Psoas muscle (tissue), 8 donors: ENCODE measurements at regions of chr16 and their contacts with region 1.

Region 1: GRCh38 chr16:65126845-65127624 is 5.2 kb upstream of the CDH11 start:
- DNase-seq: no peak
- ATAC-seq: peak in 1 of 4 donors; percentile 4
- H3K4me3 ChIP-seq: no peak overlapping the region
- H3K27ac ChIP-seq: no peak overlapping the region
- H3K4me1 ChIP-seq: peaks cover 7% of the 10 kb centered on the region
- H3K27me3 ChIP-seq: peaks cover 3 to 21% (median 5%) of the 10 kb centered on the region in 3 donors
- CTCF ChIP-seq: peak; percentile 37

Region 2: DNA sequence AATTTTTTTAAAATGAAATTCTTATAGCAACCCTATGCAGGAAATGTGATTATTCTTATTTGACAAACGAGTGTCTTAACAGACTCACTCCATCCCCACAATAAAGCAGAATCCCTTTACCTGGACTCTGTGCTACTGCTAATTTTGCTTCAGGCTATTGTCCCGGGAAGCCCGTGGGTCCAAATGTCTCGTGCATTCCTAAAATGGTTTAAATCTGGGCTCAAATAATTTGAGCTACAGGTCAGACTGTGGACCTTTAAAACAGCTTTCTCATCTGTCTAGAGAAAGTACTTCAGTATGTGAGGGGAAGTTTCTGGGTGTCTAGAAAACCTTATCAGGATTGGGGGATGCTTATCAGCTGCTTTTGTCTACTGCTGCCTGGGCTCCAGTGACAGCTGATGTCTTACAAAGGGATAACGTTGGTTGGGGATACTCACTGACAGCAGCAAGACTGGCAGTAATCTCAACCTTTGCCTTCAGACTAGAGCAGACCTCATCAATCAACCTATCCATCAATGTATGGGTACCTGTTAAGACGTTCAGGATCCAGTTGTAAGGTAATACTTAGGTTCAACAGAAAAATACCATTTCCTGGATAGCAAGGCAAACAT is 192.7 kb after region 1 on chr16:
- intact Hi-C with region 1: loop called in 1 of 2 experiments (anchors 2 kb)
- DNase-seq: no peak
- ATAC-seq: no peak
- H3K4me3 ChIP-seq: no peak overlapping the region
- H3K27ac ChIP-seq: no peak overlapping the region
- H3K4me1 ChIP-seq: peaks cover 9% of the 10 kb centered on the region
- H3K27me3 ChIP-seq: no peaks in the 10 kb centered on the region
- CTCF ChIP-seq: no peak

Region 3: DNA sequence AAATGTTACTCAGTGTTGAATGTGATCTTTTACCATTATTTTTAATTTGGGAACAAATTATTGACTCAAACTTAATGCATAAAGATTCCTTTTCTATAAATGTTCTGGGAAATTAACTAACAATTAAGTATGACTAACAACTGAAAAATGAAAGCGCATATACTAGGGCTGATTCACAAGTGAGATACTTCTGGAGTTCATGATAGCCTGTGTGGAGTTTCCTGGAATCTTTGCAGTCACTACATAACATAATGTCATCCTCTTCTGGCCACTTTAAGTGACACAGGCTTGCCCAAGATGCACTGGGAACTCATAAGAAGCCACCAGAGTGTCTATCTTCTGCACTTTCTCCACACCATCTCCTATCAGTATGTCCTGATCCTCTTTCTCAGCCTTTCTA is 445.1 kb after region 1 on chr16:
- intact Hi-C with region 1: no loop called
- DNase-seq: no peak
- ATAC-seq: no peak
- H3K4me3 ChIP-seq: no peak overlapping the region
- H3K27ac ChIP-seq: no peak overlapping the region
- H3K4me1 ChIP-seq: no peaks in the 10 kb centered on the region
- H3K27me3 ChIP-seq: peaks cover 0 to 3% (median 0%) of the 10 kb centered on the region in 3 donors
- CTCF ChIP-seq: no peak